Gastrocnemius medialis (tissue), 4 donors: ENCODE measurements at regions of chrX and their contacts with region 1.

Region 1: DNA sequence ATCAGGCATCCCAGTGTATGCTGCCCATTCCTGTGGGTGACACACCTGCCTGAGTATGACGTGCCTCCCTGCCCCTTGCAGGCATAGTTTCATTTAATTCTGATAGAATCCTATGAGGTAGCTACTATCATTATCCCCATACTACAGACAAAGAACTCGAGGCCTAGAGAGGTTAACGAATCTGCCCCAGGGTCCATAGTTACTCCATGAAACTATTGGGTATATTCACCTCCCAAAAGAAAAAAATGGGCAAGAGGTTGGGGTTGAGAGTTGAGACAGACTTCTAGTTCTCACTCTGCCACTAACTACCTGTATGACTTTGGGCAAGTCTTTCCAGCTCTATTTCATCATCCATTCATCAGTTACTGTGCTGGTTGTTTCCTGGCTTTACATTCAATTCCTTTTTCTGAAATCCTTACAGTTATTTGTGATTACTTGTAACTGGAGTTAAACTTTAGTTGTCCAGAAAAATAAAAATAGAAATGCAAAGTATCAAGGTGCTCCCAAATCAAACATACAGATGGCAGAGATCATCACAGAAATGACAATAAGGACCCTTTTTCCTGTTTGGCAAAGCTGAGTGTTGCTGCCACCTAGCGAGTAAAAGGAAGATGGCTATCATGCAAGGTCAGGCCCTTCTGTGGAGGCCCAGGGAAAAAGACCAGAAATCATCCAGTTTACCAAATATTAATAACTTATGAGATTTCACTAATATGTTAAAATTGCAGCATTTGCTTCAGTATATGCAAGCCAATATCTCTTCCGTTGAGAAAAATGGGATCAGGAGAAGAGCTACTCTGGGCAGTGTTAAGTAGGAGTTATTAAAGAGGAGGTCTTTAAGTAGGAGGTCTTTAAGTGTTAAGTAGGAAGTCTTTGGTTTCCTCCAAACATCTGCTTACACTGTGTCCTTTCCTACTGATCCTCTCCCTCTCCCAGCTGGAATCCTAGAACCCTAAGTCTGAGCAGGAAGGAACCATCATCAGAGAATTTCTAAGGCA is 17.1 kb upstream of the MAP7D3 start:
- DNase-seq: peak in 1 of 2 donors; percentile 14
- ATAC-seq: peak; percentile 50 to 53
- H3K4me3 ChIP-seq: no peak overlapping the region
- H3K27ac ChIP-seq: no peak overlapping the region
- H3K4me1 ChIP-seq: no peaks in the 10 kb centered on the region
- H3K27me3 ChIP-seq: no peaks in the 10 kb centered on the region
- CTCF ChIP-seq: peak; percentile 27 to 82 (median 57)
- POLR2A ChIP-seq: no peak

Region 2: DNA sequence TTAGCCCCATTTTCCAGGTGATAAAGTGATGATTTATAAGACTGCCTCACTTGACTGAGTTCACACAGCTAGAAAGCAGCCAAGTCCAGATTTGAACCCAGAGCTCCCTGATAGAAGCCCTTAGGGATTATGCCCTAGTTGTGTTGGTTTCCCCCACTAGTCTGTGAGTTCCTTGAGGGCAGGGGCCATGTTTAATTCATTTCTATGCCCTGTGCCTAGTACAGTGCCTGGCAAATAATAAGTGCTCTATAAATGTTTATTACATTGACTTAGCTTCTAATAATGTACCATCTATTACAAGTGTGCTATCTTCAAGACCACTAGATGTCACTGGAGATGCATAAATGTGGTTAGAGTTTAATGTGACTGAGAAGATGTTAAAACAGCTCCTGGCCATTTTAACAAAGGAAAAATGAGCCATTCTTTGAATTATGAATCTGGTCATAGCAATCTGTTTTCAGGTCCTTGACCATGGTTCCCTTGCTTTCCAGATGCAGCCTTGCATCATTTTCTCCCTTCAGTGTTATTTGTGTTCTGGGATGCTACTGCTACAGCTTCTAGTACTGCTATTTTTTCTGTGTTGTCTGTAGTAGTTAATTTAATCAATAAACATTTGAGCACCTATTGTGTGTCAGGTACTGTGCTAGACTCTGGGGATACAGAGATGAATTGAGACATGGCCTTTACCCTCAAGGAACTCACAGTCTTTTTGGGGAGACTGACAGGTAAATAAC is 239.9 kb before region 1 on chrX:
- in situ Hi-C with region 1: loop called (anchors 10 to 25 kb)
- intact Hi-C with region 1: loop called (anchors 1 kb)
- DNase-seq: no peak
- ATAC-seq: peak; percentile 64 to 72
- H3K4me3 ChIP-seq: no peak overlapping the region
- H3K27ac ChIP-seq: peak overlapping the region in 1 of 4 donors; percentile 70
- H3K4me1 ChIP-seq: peaks cover 9 to 19% of the 10 kb centered on the region in 2 donors
- H3K27me3 ChIP-seq: no peaks in the 10 kb centered on the region
- CTCF ChIP-seq: peak; percentile 37 to 70 (median 47)
- POLR2A ChIP-seq: no peak

Region 3: GRCh38 chrX:136162831-136163570 is 105.3 kb before region 1 on chrX:
- in situ Hi-C with region 1: loop called in 3 of 4 experiments (anchors 5 to 25 kb)
- intact Hi-C with region 1: loop called (anchors 1 kb)
- DNase-seq: peak in 1 of 2 donors; percentile 51
- ATAC-seq: peak; percentile 61 to 79
- H3K4me3 ChIP-seq: no peak overlapping the region
- H3K27ac ChIP-seq: peak overlapping the region; percentile 10 to 35 (median 16)
- H3K4me1 ChIP-seq: peaks cover 6 to 8% of the 10 kb centered on the region in 2 donors
- H3K27me3 ChIP-seq: no peaks in the 10 kb centered on the region
- CTCF ChIP-seq: peak; percentile 51 to 75 (median 74)
- POLR2A ChIP-seq: no peak

Region 4: GRCh38 chrX:136168929-136169735 is 99.2 kb before region 1 on chrX:
- in situ Hi-C with region 1: loop called in 3 of 4 experiments (anchors 5 to 25 kb)
- intact Hi-C with region 1: loop called (anchors 1 kb)
- DNase-seq: peak in 1 of 2 donors; percentile 35
- ATAC-seq: peak; percentile 16 to 78
- H3K4me3 ChIP-seq: peak overlapping the region in 1 of 4 donors; percentile 18
- H3K27ac ChIP-seq: peak overlapping the region; percentile 78 to 92 (median 84)
- H3K4me1 ChIP-seq: peaks cover 7 to 29% of the 10 kb centered on the region in 2 donors
- H3K27me3 ChIP-seq: no peaks in the 10 kb centered on the region
- CTCF ChIP-seq: no peak
- POLR2A ChIP-seq: no peak

Region 5: DNA sequence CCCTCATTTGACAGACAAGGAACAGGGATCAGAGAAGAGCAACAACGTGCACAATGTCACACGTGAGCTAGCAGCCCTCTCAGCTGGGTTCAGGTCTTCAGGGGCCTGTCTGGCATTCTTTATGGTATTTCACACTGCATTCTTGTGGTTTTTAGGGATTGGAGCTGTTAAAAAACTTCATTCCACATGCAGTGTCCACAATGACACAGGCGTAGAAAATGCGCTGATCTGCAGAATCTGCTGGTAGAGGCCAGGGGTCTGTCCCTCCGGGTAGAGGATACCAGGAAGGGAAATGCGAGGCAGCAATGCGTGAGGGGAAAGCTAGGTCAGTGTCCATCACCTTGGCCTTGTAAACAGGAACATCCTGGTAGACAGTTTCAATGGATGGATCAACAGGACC is 53.8 kb before region 1 on chrX:
- in situ Hi-C with region 1: loop called in 1 of 4 experiments (anchors 10 kb)
- intact Hi-C with region 1: loop called (anchors 5 kb)
- DNase-seq: no peak
- ATAC-seq: no peak
- H3K4me3 ChIP-seq: no peak overlapping the region
- H3K27ac ChIP-seq: peak overlapping the region in 2 of 4 donors; percentile 31 to 92
- H3K4me1 ChIP-seq: no peaks in the 10 kb centered on the region
- H3K27me3 ChIP-seq: no peaks in the 10 kb centered on the region
- CTCF ChIP-seq: no peak
- POLR2A ChIP-seq: no peak

Region 6: DNA sequence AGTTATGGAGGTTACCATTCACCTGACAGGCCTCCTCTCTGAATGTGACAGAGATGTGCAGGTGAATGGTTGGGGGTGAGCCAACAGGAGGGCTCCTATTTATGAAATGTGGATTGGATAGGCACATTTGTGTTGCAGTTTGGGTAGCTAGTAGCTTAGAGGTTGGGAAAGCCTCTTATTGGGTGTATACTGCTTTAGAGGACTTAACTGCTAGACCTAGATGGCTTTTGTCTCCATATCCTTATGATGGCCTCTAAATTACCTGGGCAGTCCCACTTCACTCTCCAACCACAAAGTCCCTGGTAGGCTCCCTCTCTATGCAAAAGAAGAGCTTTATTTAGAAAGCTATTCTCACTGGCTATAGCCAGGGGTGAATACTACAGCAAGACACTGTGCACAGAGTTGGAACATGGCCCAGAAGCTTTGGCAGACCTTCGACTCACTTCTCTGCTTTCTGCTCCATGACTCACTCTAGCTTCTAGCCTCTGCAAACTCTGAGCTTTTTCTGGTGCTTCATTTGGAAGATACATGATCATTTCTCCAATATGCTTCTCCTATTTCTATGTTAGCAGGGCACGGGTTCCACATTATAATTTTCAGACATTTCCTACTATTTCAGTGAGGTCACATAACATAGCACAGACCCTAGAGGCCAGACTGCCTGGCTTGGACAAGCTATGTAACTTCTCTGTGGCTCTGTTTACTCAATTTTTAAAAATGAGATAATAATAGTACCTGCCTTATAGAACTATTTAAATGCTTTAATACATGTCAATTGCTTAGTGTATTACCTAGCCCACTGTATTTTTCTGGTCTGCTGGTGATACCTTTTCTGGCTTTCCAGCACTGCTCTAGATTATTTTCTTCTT is 257.6 kb after region 1 on chrX:
- in situ Hi-C with region 1: no loop called
- intact Hi-C with region 1: loop called (anchors 10 kb)
- DNase-seq: peak; percentile 61 to 86
- ATAC-seq: peak; percentile 95 to 100
- H3K4me3 ChIP-seq: no peak overlapping the region
- H3K27ac ChIP-seq: peak overlapping the region; percentile 51 to 74 (median 62)
- H3K4me1 ChIP-seq: peaks cover 11 to 14% of the 10 kb centered on the region in 2 donors
- H3K27me3 ChIP-seq: no peaks in the 10 kb centered on the region
- CTCF ChIP-seq: no peak
- POLR2A ChIP-seq: no peak